Activated CD4-positive, alpha-beta memory T cell treated with anti-CD3 and anti-CD28 coated beads for 36 hours (primary cell): ENCODE measurements at regions of chr11 and their contacts with region 1.

Region 1: DNA sequence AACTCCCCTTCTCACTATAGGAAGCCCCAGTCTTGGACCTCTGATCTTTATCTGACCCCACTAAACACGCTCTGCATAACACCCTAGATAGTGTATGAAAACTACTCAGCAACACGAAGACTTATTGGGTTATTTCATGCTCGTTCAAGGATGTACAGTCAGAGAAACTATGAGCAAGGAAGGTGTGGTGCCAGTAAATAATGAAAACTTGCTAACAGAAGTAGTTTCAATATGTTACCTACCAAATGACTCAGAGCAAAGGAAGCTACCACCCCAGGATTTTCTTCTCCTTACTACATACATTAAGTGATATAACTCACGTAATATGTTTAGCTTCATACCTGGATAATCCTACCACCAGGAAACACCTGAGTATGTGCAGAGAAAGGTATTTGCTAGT is 25.9 kb upstream of the LYVE1 start:
- DNase-seq: no peak
- H3K4me3 Mint-ChIP-seq: no peak overlapping the region
- H3K27ac Mint-ChIP-seq: no peak overlapping the region
- H3K4me1 Mint-ChIP-seq: peaks cover 5% of the 10 kb centered on the region
- H3K27me3 Mint-ChIP-seq: peaks cover 13% of the 10 kb centered on the region

Region 2: DNA sequence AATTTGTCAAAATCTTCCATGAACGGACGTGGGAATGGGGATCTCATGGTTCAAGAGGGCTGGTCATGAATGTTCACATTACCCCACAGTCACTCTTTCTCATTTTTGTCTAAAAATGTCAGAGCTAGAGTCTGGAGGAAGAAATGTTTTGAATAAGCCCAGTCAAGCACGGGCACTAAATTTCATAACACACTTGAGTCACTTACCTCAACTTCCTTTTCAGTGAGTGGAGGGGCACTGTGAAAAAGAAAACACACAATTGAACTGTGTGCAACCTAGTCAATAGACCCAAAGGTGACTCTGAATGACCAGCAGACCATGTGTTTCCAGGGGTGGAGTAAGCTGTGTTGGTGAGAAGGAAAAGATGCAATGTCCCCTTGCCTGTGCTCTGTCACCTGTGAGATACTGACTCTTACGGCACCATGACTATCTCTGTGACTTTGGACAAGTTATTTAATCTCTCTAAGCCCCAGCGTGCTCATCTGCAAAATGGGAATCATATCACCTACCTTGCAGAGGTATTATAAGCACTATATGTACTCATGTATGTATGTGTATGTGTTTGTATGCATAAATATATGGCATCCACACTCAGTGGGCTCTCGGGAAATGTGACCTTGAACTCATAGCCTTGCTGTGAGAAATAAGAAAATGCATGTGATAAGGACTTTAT is 12.3 kb after region 1 on chr11:
- CTCF ChIA-PET with region 1: interaction called, 3 read pairs
- POLR2A ChIA-PET with region 1: interaction called, 4 read pairs
- intact Hi-C with region 1: loop called (anchors 1 kb)
- DNase-seq: no peak
- H3K4me3 Mint-ChIP-seq: no peak overlapping the region
- H3K27ac Mint-ChIP-seq: no peak overlapping the region
- H3K4me1 Mint-ChIP-seq: peaks cover 5% of the 10 kb centered on the region
- H3K27me3 Mint-ChIP-seq: peaks cover 10% of the 10 kb centered on the region